IMR-90 (cell line): ENCODE measurements at regions of chr4 and their contacts with region 1.

Region 1: DNA sequence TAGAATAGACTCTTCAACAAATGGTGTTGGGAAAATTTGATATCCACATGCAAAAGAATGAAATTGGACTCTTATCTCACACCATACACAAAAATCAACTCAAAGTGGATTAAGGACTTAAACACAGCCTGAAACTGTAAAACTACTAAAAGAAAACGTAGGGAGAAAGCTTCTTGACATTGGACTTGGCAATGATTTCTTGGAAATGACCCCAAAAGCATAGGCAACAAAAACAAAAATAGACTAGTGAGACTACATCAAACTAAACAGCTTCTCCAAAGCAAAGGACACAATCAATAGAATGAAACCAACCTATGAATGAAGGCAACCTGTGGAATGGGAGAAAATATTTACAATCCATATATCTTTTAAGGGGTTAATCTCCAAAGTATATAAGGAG is 94.7 kb upstream of the INTU start:
- DNase-seq: no peak
- ATAC-seq: no peak
- H3K4me3 ChIP-seq: no peak overlapping the region
- H3K27ac ChIP-seq: no peak overlapping the region
- H3K4me1 ChIP-seq: peaks cover 3% of the 10 kb centered on the region; the same call in 1 of the 2 replicates
- H3K27me3 ChIP-seq: peaks cover 2% of the 10 kb centered on the region; the same call in 1 of the 2 replicates
- CTCF ChIP-seq: no peak
- POLR2A ChIP-seq: no peak
- RAD21 ChIP-seq: no peak

Region 2: GRCh38 chr4:127188856-127189255 is 349.2 kb before region 1 on chr4:
- CTCF ChIA-PET with region 1: no interaction called
- POLR2A ChIA-PET with region 1: no interaction called
- dilution Hi-C with region 1: no loop called
- in situ Hi-C with region 1: no loop called
- intact Hi-C with region 1: loop called (anchors 1 kb)
- DNase-seq: peak; percentile 25
- ATAC-seq: no peak
- H3K4me3 ChIP-seq: no peak overlapping the region
- H3K27ac ChIP-seq: no peak overlapping the region
- H3K4me1 ChIP-seq: no peaks in the 10 kb centered on the region
- H3K27me3 ChIP-seq: no peaks in the 10 kb centered on the region
- CTCF ChIP-seq: 0 out of 2 replicates have a peak, but pooled peaks have one; percentile 23
- POLR2A ChIP-seq: no peak
- RAD21 ChIP-seq: peak; percentile 44

Region 3: DNA sequence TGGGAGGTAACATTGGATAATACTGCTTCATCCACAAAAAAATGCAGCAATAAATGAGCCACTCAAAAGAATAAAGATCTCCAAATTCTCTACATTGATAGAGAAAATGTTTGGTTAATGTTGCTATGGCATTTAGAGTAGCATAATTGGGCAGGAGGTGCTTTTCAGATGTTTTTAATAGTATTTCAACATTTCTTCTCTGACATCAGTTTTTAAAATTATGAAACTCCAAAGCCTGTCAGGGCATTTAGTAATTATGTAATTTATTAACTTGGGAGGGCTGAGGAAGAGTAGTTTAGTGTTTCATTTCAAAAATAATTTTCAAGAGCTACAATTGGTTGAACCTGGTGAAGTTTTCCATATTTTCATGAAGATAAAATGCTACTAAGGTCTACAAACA is 116.6 kb before region 1 on chr4:
- CTCF ChIA-PET with region 1: no interaction called
- POLR2A ChIA-PET with region 1: no interaction called
- dilution Hi-C with region 1: no loop called
- in situ Hi-C with region 1: no loop called
- intact Hi-C with region 1: loop called (anchors 5 kb)
- DNase-seq: no peak
- ATAC-seq: no peak
- H3K4me3 ChIP-seq: no peak overlapping the region
- H3K27ac ChIP-seq: no peak overlapping the region
- H3K4me1 ChIP-seq: no peaks in the 10 kb centered on the region; the same call in 1 of the 2 replicates
- H3K27me3 ChIP-seq: no peaks in the 10 kb centered on the region; the same call in 1 of the 2 replicates
- CTCF ChIP-seq: no peak
- POLR2A ChIP-seq: no peak
- RAD21 ChIP-seq: no peak

Region 4: DNA sequence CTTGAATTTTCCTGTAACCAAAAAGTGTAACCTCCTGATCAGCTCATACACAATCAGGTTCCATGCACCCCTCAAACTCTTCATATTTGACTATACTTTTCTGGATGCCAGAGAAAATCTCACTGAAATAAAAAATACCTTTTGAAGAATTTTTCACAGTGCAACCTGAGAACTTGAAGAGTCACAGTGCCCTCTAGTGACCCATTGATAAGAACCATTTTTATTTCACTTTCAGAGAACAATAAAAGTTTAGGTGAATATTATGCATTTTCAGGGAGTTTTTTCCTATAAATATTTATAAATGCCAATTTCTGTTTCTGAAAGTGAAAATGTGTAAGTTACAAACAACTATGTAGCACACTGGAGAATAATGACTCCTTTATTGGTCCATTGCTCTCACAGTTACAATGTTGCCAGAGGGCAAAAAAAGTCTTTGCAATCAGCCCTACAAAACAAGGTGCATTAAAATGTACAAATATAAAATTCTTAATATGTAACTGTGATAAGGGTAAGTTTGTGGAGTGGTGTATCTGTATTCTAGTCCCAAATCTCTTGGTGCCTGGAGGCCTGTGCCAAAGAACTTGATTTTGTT is 58.9 kb before region 1 on chr4:
- CTCF ChIA-PET with region 1: no interaction called
- POLR2A ChIA-PET with region 1: no interaction called
- dilution Hi-C with region 1: no loop called
- in situ Hi-C with region 1: no loop called
- intact Hi-C with region 1: loop called (anchors 2 kb)
- DNase-seq: peak; percentile 52
- ATAC-seq: 0 out of 2 replicates have a peak, but pooled peaks have one; percentile 37
- H3K4me3 ChIP-seq: no peak overlapping the region
- H3K27ac ChIP-seq: no peak overlapping the region
- H3K4me1 ChIP-seq: no peaks in the 10 kb centered on the region
- H3K27me3 ChIP-seq: no peaks in the 10 kb centered on the region
- CTCF ChIP-seq: peak; percentile 64
- POLR2A ChIP-seq: no peak
- RAD21 ChIP-seq: peak; percentile 66

Region 5: GRCh38 chr4:127558489-127559407 is 20.7 kb after region 1 on chr4:
- CTCF ChIA-PET with region 1: no interaction called
- POLR2A ChIA-PET with region 1: no interaction called
- dilution Hi-C with region 1: no loop called
- in situ Hi-C with region 1: no loop called
- intact Hi-C with region 1: no loop called
- DNase-seq: no peak
- ATAC-seq: no peak
- H3K4me3 ChIP-seq: no peak overlapping the region
- H3K27ac ChIP-seq: no peak overlapping the region
- H3K4me1 ChIP-seq: no peaks in the 10 kb centered on the region
- H3K27me3 ChIP-seq: peaks cover 2% of the 10 kb centered on the region; the same call in 1 of the 2 replicates
- CTCF ChIP-seq: no peak
- POLR2A ChIP-seq: no peak
- RAD21 ChIP-seq: no peak

Region 6: GRCh38 chr4:127604949-127605709 is 67.1 kb after region 1 on chr4:
- CTCF ChIA-PET with region 1: no interaction called
- POLR2A ChIA-PET with region 1: no interaction called
- dilution Hi-C with region 1: no loop called
- in situ Hi-C with region 1: no loop called
- intact Hi-C with region 1: no loop called
- DNase-seq: peak; percentile 48
- ATAC-seq: no peak
- H3K4me3 ChIP-seq: no peak overlapping the region
- H3K27ac ChIP-seq: no peak overlapping the region
- H3K4me1 ChIP-seq: no peaks in the 10 kb centered on the region
- H3K27me3 ChIP-seq: peaks cover 10% of the 10 kb centered on the region
- CTCF ChIP-seq: peak; percentile 72
- POLR2A ChIP-seq: no peak
- RAD21 ChIP-seq: peak; percentile 64